Caco-2 (cell line): ENCODE measurements at regions of chr15 and their contacts with region 1.

Region 1: DNA sequence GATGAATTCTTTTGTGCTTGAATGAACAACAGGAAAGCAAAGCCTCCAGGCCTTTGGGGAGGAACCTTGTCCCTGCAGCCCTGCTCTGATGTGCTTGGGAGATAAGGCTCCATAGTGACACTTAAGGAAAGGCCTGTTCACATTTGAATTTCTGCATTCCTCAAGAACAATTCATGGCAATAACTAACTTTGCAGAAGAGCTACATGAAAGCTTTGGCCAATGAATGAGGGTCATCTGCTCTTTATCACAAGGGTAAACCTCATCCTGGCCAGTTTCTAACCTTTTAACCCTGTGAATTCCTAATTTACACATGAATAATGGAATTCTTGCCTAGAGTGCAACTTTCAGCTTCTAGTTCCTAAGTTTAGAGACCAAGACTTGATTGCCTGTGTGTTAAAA is 5.6 kb downstream of the PRTG start:
- DNase-seq: peak; percentile 59 to 69
- H3K4me3 ChIP-seq: no peak overlapping the region
- H3K4me3 Mint-ChIP-seq: peak overlapping the region; percentile 29
- H3K27ac Mint-ChIP-seq: peak overlapping the region; percentile 69
- H3K4me1 ChIP-seq: peaks cover 68% of the 10 kb centered on the region
- H3K4me1 Mint-ChIP-seq: peaks cover 14% of the 10 kb centered on the region
- H3K27me3 ChIP-seq: no peaks in the 10 kb centered on the region
- H3K27me3 Mint-ChIP-seq: no peaks in the 10 kb centered on the region
- CTCF ChIP-seq: no peak

Region 2: GRCh38 chr15:55589287-55589686 is 148.1 kb before region 1 on chr15:
- CTCF ChIA-PET with region 1: no interaction called
- POLR2A ChIA-PET with region 1: no interaction called
- intact Hi-C with region 1: no loop called
- DNase-seq: no peak
- H3K4me3 ChIP-seq: no peak overlapping the region
- H3K4me3 Mint-ChIP-seq: no peak overlapping the region
- H3K27ac Mint-ChIP-seq: peak overlapping the region; percentile 56
- H3K4me1 ChIP-seq: no peaks in the 10 kb centered on the region
- H3K4me1 Mint-ChIP-seq: peaks cover 5% of the 10 kb centered on the region
- H3K27me3 ChIP-seq: no peaks in the 10 kb centered on the region
- H3K27me3 Mint-ChIP-seq: no peaks in the 10 kb centered on the region
- CTCF ChIP-seq: no peak

Region 3: GRCh38 chr15:55661428-55661827 is 75.9 kb before region 1 on chr15:
- CTCF ChIA-PET with region 1: no interaction called
- POLR2A ChIA-PET with region 1: no interaction called
- intact Hi-C with region 1: loop called (anchors 1 kb)
- DNase-seq: peak in 1 of 2 experiments; percentile 59
- H3K4me3 ChIP-seq: no peak overlapping the region
- H3K4me3 Mint-ChIP-seq: peak overlapping the region; percentile 21
- H3K27ac Mint-ChIP-seq: peak overlapping the region; percentile 64
- H3K4me1 ChIP-seq: peaks cover 32% of the 10 kb centered on the region
- H3K4me1 Mint-ChIP-seq: peaks cover 19% of the 10 kb centered on the region
- H3K27me3 ChIP-seq: no peaks in the 10 kb centered on the region
- H3K27me3 Mint-ChIP-seq: no peaks in the 10 kb centered on the region
- CTCF ChIP-seq: no peak

Region 4: GRCh38 chr15:55694652-55695150 is 42.7 kb before region 1 on chr15:
- CTCF ChIA-PET with region 1: no interaction called
- POLR2A ChIA-PET with region 1: no interaction called
- intact Hi-C with region 1: loop called (anchors 1 kb)
- DNase-seq: no peak
- H3K4me3 ChIP-seq: no peak overlapping the region
- H3K4me3 Mint-ChIP-seq: no peak overlapping the region
- H3K27ac Mint-ChIP-seq: no peak overlapping the region
- H3K4me1 ChIP-seq: peaks cover 4% of the 10 kb centered on the region; the same call in 1 of the 2 replicates
- H3K4me1 Mint-ChIP-seq: peaks cover 7% of the 10 kb centered on the region
- H3K27me3 ChIP-seq: no peaks in the 10 kb centered on the region
- H3K27me3 Mint-ChIP-seq: no peaks in the 10 kb centered on the region
- CTCF ChIP-seq: no peak

Region 5: DNA sequence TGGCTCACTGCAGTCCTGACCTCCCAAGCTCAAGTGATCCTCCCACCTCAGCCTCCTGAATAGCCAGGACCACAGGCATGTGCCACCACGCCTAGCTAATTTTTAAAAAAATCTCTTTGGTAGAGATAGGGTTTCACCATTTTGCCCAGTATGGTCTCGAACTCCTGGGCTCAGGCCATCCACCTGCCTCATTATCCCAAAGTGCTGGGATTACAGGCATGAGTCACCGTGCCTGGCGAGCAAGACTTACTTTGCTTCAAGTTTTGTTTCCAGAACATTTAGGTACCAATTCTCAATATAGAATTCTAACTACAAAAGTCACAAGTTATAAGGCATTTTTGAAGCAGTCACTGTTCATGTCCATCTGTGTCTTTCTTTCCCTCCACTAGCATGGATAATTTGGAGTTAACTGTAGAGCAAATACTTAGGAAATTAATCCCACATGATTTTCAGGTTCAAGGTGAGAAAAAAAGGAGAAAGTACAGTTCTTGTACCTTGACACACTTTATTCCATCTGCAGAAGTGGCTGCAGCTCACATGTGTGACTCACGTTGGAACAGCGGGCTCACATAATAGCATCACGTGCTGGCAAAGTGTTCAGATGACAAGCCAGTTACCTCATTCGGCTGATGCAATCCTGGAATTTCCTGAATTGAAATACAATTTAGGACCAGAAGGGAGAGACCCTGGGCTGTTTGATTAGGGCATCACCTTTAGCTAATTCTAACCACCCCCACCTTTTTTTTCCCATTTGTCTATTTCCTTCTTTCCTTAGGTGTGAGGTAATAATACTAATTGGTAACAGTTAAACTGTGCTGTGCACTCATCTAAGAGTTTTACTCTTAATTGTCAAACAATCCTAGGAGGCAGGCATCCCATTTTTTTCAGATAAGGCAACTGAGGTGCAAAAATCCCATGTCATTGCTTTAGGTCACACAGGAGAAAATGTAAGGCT is 303.0 kb after region 1 on chr15:
- CTCF ChIA-PET with region 1: no interaction called
- POLR2A ChIA-PET with region 1: no interaction called
- intact Hi-C with region 1: loop called (anchors 2 kb)
- DNase-seq: peak; percentile 85 to 88
- H3K4me3 ChIP-seq: no peak overlapping the region
- H3K4me3 Mint-ChIP-seq: peak overlapping the region; percentile 33
- H3K27ac Mint-ChIP-seq: peak overlapping the region; percentile 91
- H3K4me1 ChIP-seq: peaks cover 90% of the 10 kb centered on the region
- H3K4me1 Mint-ChIP-seq: peaks cover 63% of the 10 kb centered on the region
- H3K27me3 ChIP-seq: no peaks in the 10 kb centered on the region
- H3K27me3 Mint-ChIP-seq: no peaks in the 10 kb centered on the region
- CTCF ChIP-seq: no peak